A673 (cell line): ENCODE measurements at regions of chr1 and their contacts with region 1.

Region 1: DNA sequence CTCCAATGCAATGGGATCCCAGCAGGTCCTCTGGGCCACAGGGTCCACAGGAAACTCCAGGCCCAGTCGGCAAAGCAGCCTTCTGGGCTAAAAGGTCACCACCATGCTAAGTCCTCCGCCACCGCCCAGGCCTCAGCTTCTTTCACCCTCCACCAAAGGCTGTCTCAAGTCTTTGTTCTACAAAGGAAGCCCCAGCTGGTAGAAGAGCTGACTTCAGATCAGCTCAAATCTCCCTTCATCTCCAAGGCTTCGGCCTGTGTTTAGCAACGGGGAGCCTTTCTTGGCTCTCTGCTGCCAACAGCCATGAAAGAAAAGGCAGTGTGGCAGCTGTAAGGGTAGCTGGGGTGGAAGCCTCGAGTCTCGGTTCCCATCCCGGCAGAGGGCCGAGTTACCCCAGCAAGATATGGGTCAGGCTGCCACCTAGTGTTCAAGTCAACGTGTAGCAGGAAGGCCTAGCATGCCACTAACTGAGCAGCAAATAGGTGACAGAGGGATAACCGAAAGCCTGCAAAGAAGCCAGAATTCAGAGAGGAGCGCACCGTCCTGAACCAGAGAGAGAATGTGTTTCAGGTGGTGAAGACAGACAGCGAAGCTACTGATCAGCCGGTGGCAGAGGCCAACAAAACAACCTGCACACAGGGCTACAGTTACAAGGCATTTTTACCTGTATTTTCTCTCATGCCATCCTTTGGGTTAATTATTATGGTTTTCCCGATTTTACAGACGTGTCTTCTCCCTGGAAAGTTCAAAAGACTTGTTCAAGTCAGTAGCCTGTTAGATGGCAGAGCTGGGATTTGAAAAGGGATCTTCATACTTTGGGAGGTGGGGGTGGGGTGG is 26.8 kb upstream of the CRNN start:
- DNase-seq: peak; percentile 83
- H3K4me3 ChIP-seq: no peak overlapping the region
- H3K27ac ChIP-seq: no peak overlapping the region
- H3K4me1 ChIP-seq: no peaks in the 10 kb centered on the region
- H3K27me3 ChIP-seq: peaks cover 7% of the 10 kb centered on the region
- CTCF ChIP-seq: peak; percentile 87

Region 2: GRCh38 chr1:152141974-152142584 is 298.8 kb before region 1 on chr1:
- CTCF ChIA-PET with region 1: interaction called, 3 read pairs
- POLR2A ChIA-PET with region 1: interaction called, 3 read pairs
- intact Hi-C with region 1: loop called (anchors 5 kb)
- DNase-seq: peak; percentile 73
- H3K4me3 ChIP-seq: no peak overlapping the region
- H3K27ac ChIP-seq: no peak overlapping the region
- H3K4me1 ChIP-seq: no peaks in the 10 kb centered on the region
- H3K27me3 ChIP-seq: no peaks in the 10 kb centered on the region
- CTCF ChIP-seq: peak; percentile 82

Region 3: GRCh38 chr1:152502496-152503180 is 61.8 kb after region 1 on chr1:
- CTCF ChIA-PET with region 1: no interaction called
- POLR2A ChIA-PET with region 1: no interaction called
- intact Hi-C with region 1: no loop called
- DNase-seq: no peak
- H3K4me3 ChIP-seq: no peak overlapping the region
- H3K27ac ChIP-seq: no peak overlapping the region
- H3K4me1 ChIP-seq: no peaks in the 10 kb centered on the region
- H3K27me3 ChIP-seq: peaks cover 14% of the 10 kb centered on the region
- CTCF ChIP-seq: no peak

Region 4: DNA sequence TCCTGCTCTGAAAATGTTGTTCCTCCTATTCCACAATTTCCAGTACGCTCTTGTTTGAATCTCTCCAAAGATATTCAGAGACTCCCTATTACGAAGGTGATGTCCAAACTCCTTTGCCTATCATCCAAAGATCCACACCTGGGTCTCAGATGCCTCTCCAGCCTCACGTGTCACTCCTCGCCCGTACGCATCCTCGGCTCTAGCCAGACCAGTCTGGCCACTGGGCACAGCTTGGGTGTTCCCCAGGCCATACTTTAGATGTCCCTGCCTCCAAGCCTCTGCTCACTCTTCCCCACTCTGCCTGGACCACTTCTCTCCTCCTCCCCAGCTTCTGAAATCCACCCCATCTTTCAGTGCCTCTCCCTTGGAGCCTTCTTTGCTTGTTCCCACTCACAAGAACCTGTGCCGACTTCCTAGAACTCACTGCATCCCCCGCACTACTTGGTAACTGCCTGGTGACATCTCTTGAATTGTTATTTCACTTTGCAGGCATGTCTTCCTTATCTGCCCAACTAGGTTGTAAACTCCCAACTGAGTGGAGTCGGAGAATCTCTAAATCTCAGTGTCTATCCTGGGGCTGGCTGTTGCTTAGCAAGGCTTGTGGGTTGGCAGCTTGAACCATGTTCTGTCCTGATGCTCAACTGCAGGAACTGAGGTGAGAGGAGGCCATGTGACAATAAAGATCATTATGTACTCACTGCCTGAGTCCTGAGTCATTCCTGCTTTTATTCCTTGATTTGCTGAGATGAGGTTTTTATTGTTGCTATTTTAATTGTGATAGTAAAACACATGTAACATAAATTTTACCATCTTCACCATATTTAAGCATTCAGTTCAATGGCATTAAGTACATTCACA is 320.7 kb after region 1 on chr1:
- CTCF ChIA-PET with region 1: no interaction called
- POLR2A ChIA-PET with region 1: no interaction called
- intact Hi-C with region 1: no loop called
- DNase-seq: no peak
- H3K4me3 ChIP-seq: no peak overlapping the region
- H3K27ac ChIP-seq: no peak overlapping the region
- H3K4me1 ChIP-seq: no peaks in the 10 kb centered on the region
- H3K27me3 ChIP-seq: no peaks in the 10 kb centered on the region
- CTCF ChIP-seq: no peak